H1 (cell line): ENCODE measurements at regions of chr9 and their contacts with region 1.

Region 1: GRCh38 chr9:135281791-135282731 is 194.6 kb downstream of the OLFM1 start:
- DNase-seq: no peak
- H3K4me3 ChIP-seq: no peak overlapping the region
- H3K27ac ChIP-seq: no peak overlapping the region
- H3K4me1 ChIP-seq: peaks cover 0 to 2% (median 0%) of the 10 kb centered on the region in 4 experiments; a peak in 1 of 7 replicates
- H3K27me3 ChIP-seq: no peaks in the 10 kb centered on the region
- CTCF ChIP-seq: no peak
- EP300 ChIP-seq: no peak
- POLR2A ChIP-seq: no peak
- RAD21 ChIP-seq: no peak

Region 2: DNA sequence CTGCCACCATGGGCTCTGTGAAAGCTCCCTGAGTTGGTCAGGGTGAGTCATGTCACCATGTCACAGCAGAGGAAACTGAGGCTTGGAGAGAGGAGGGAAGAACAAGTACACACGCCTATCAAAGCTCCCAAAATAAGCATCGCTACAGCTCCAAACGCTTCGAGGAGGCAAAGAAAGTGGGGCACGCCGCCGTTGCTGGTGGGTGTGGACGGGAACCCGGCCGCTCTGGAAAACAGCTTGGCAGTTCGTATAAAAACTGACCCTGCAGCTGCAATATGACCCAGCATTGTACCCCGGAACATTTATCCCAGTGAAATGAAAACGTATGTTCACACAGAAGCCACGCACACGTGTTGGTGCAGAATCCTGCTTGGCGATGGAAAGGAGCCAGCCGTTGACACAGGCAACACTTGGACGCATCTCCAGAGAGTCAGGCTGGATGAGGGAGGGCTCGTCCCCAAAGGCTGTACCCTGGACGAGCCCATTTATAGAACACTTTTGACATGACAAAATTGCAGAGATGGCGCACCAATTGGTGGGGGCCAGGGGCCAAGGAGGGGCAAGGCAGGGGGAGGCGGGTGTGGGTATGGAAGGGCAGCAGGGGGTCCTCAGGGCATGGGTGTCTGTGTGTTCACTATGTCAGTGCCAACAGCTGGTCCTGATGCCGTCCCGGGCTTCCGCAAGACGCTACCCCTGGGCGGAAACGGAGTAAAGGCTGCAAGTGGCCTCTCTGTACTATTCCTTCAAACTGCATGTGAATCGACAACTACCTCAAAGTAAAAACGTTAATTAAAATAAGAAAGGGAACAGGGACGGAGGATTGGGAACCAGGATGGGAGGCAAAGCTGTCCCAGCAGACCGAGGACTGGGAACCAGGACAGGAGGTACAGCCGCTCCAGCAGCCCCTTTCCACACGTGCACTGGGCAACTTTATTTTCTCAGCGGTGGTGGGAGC is 21.6 kb before region 1 on chr9:
- CTCF ChIA-PET with region 1: interaction called, 11 read pairs
- POLR2A ChIA-PET with region 1: no interaction called
- DNase-seq: no peak
- H3K4me3 ChIP-seq: peak overlapping the region in 1 of 4 experiments; percentile 8; a peak in 1 of 8 replicates
- H3K27ac ChIP-seq: no peak overlapping the region
- H3K4me1 ChIP-seq: peaks cover 4 to 14% (median 10%) of the 10 kb centered on the region in 4 experiments
- H3K27me3 ChIP-seq: no peaks in the 10 kb centered on the region; a peak in 1 of 7 replicates
- CTCF ChIP-seq: no peak
- EP300 ChIP-seq: no peak
- POLR2A ChIP-seq: no peak
- RAD21 ChIP-seq: no peak

Region 3: GRCh38 chr9:135329571-135330306 is 47.7 kb after region 1 on chr9:
- CTCF ChIA-PET with region 1: no interaction called
- POLR2A ChIA-PET with region 1: no interaction called
- DNase-seq: peak; percentile 15 to 64
- H3K4me3 ChIP-seq: no peak overlapping the region
- H3K27ac ChIP-seq: no peak overlapping the region
- H3K4me1 ChIP-seq: peaks cover 0 to 5% (median 0%) of the 10 kb centered on the region in 4 experiments; a peak in 1 of 7 replicates
- H3K27me3 ChIP-seq: 0 out of 7 replicates have a peak, but pooled peaks cover 0 to 3% (median 0%) of the 10 kb centered on the region in 4 experiments
- CTCF ChIP-seq: no peak
- EP300 ChIP-seq: no peak
- POLR2A ChIP-seq: no peak
- RAD21 ChIP-seq: peak in 1 of 2 experiments; percentile 32; a peak in 1 of 4 replicates

Region 4: GRCh38 chr9:135343837-135344522 is 61.9 kb after region 1 on chr9:
- CTCF ChIA-PET with region 1: interaction called, 50 read pairs
- POLR2A ChIA-PET with region 1: interaction called, 3 read pairs
- DNase-seq: peak; percentile 39 to 96
- H3K4me3 ChIP-seq: no peak overlapping the region
- H3K27ac ChIP-seq: no peak overlapping the region
- H3K4me1 ChIP-seq: peaks cover 2 to 29% (median 20%) of the 10 kb centered on the region in 4 experiments
- H3K27me3 ChIP-seq: no peaks in the 10 kb centered on the region
- CTCF ChIP-seq: peak in 2 of 3 experiments; percentile 98; a peak in 3 of 4 replicates
- EP300 ChIP-seq: no peak
- POLR2A ChIP-seq: no peak
- RAD21 ChIP-seq: peak; percentile 94 to 98